B cell (primary cell): ENCODE measurements at regions of chr3 and their contacts with region 1.

Region 1: GRCh38 chr3:27357665-27358258 is 11.4 kb downstream of the NEK10 start:
- DNase-seq: peak; percentile 67
- ATAC-seq: peak; percentile 80
- H3K4me3 ChIP-seq: no peak overlapping the region
- H3K4me3 Mint-ChIP-seq: no peak overlapping the region
- H3K27ac ChIP-seq: no peak overlapping the region
- H3K27ac Mint-ChIP-seq: no peak overlapping the region
- H3K4me1 ChIP-seq: peaks cover 22 to 29% of the 10 kb centered on the region in 2 donors
- H3K4me1 Mint-ChIP-seq: peaks cover 34% of the 10 kb centered on the region
- H3K27me3 ChIP-seq: no peaks in the 10 kb centered on the region
- H3K27me3 Mint-ChIP-seq: no peaks in the 10 kb centered on the region
- CTCF ChIP-seq: peak; percentile 81

Region 2: DNA sequence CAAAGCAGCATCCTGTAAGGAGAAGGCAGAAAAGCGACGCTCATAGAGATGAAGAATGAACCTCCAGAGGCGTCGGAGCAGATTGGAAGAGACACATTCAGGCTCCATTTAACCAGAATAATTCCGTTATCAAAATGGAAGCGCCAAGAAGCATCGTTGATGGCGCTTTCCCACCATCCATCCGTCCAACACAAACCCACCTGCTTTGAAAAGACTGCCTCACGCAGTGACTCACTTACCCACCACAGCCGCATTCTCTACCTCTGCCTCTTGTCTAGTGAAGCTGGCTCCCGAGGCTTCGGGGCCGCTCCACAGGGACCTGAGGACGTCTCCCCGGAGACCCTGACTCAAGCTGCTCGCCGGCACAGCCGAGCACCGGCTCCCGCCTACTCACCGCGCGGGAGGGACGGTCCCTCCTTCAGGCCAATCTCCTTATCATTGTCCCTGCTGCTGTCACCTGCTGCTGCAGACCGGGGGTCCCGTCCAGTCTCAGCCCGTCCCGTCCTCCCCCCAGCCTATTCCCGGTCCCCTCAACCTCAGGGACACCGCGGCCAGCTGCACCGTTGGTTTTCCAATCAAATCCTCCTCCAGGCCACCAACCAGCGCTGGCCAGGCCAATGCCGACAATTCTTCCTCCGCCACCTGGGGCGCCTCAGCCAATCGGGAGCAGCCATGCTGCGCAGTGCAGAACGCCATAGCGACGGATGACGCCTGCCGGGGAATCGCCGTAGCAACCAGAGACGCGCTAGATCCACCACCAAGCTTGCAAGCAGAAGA is 11.3 kb after region 1 on chr3 and contains the start of gene NEK10:
- CTCF ChIA-PET with region 1: interaction called, 11 read pairs
- POLR2A ChIA-PET with region 1: no interaction called
- intact Hi-C with region 1: loop called (anchors 1 kb)
- DNase-seq: peak; percentile 92
- ATAC-seq: peak; percentile 98
- H3K4me3 ChIP-seq: peak within 1 kb of the TSS; percentile 52 to 69 (median 61)
- H3K4me3 Mint-ChIP-seq: peak within 1 kb of the TSS; percentile 94
- H3K27ac ChIP-seq: no peak within 1 kb of the TSS
- H3K27ac Mint-ChIP-seq: peak within 1 kb of the TSS; percentile 78
- H3K4me1 ChIP-seq: peaks cover 7 to 14% of the 10 kb centered on the region in 2 donors
- H3K4me1 Mint-ChIP-seq: peaks cover 17% of the 10 kb centered on the region
- H3K27me3 ChIP-seq: no peaks in the 10 kb centered on the region
- H3K27me3 Mint-ChIP-seq: peaks cover 3% of the 10 kb centered on the region
- CTCF ChIP-seq: no peak
- total RNA-seq, gene NEK10: 0.36 and 0.49 TPM in 2 replicates

Region 3: GRCh38 chr3:27467545-27467944 is 109.8 kb after region 1 on chr3:
- CTCF ChIA-PET with region 1: interaction called, 16 read pairs
- POLR2A ChIA-PET with region 1: no interaction called
- intact Hi-C with region 1: loop called (anchors 1 kb)
- DNase-seq: peak; percentile 59
- ATAC-seq: peak; percentile 71
- H3K4me3 ChIP-seq: no peak overlapping the region
- H3K4me3 Mint-ChIP-seq: peak overlapping the region; percentile 6
- H3K27ac ChIP-seq: no peak overlapping the region
- H3K27ac Mint-ChIP-seq: peak overlapping the region; percentile 3
- H3K4me1 ChIP-seq: peaks cover 0 to 3% of the 10 kb centered on the region in 2 donors
- H3K4me1 Mint-ChIP-seq: peaks cover 24% of the 10 kb centered on the region
- H3K27me3 ChIP-seq: no peaks in the 10 kb centered on the region
- H3K27me3 Mint-ChIP-seq: no peaks in the 10 kb centered on the region
- CTCF ChIP-seq: peak; percentile 75

Region 4: GRCh38 chr3:27659279-27660021 is 301.7 kb after region 1 on chr3:
- CTCF ChIA-PET with region 1: interaction called, 3 read pairs
- POLR2A ChIA-PET with region 1: no interaction called
- intact Hi-C with region 1: loop called (anchors 5 kb)
- DNase-seq: peak; percentile 52
- ATAC-seq: peak; percentile 62
- H3K4me3 ChIP-seq: no peak overlapping the region
- H3K4me3 Mint-ChIP-seq: no peak overlapping the region
- H3K27ac ChIP-seq: no peak overlapping the region
- H3K27ac Mint-ChIP-seq: no peak overlapping the region
- H3K4me1 ChIP-seq: peaks cover 0 to 2% of the 10 kb centered on the region in 2 donors
- H3K4me1 Mint-ChIP-seq: peaks cover 8% of the 10 kb centered on the region
- H3K27me3 ChIP-seq: no peaks in the 10 kb centered on the region
- H3K27me3 Mint-ChIP-seq: no peaks in the 10 kb centered on the region
- CTCF ChIP-seq: peak; percentile 85

Region 5: GRCh38 chr3:27681245-27681748 is 323.5 kb after region 1 on chr3:
- CTCF ChIA-PET with region 1: interaction called, 24 read pairs
- POLR2A ChIA-PET with region 1: no interaction called
- intact Hi-C with region 1: loop called (anchors 1 kb)
- DNase-seq: peak; percentile 87
- ATAC-seq: peak; percentile 90
- H3K4me3 ChIP-seq: peak overlapping the region in 1 of 5 experiments; percentile 26
- H3K4me3 Mint-ChIP-seq: peak overlapping the region; percentile 51
- H3K27ac ChIP-seq: no peak overlapping the region
- H3K27ac Mint-ChIP-seq: peak overlapping the region; percentile 28
- H3K4me1 ChIP-seq: peaks cover 5 to 17% of the 10 kb centered on the region in 2 donors
- H3K4me1 Mint-ChIP-seq: peaks cover 17% of the 10 kb centered on the region
- H3K27me3 ChIP-seq: peaks cover 0 to 3% (median 0%) of the 10 kb centered on the region in 4 experiments
- H3K27me3 Mint-ChIP-seq: peaks cover 4% of the 10 kb centered on the region
- CTCF ChIP-seq: peak; percentile 79

Region 6: DNA sequence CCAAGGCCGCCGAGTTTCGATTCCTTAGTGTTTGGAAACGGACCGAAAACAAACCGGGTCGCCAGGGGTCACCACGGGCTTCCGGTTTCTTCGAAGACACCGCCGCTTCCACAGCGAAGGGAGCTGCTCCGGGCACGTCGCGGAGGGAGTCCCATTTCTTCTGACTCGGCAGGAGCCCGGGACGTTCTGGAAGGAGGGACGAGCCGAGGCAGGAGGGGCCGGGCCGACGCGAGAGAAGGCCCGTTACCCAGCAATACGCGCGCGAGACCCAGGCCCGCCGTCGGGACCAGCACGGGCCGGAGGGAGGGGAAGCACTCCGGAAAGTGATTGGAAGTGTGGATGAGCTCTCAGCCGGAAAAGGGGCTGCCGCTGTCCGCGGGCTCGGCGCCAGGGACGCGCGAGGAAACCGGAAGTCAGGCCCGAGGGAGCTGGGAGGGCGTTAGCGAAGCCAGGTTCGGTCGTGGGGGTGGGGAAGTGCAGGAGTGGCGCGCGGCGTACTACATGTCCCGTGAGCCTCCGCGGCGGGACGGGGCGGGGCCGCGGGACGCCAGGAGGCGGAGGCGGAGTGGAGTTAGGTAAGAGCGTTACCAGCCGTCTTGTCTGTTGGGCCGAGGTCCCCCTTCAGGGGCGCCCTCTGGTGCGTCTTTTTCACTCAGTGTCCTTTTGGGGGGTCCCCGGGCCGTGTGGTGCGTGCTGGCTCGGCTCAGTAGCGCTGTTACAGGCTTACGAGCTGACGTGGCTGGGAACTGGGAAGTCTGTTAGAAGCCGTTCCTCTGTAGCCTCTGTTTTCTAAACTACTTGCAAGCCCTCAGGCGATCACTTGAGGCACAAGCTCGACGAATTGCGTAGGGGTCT is 991.1 kb after region 1 on chr3 and contains the starts of genes AZI2 and ZCWPW2:
- CTCF ChIA-PET with region 1: no interaction called
- POLR2A ChIA-PET with region 1: no interaction called
- intact Hi-C with region 1: loop called (anchors 2 kb)
- DNase-seq: peak; percentile 94
- ATAC-seq: peak; percentile 88
- H3K4me3 ChIP-seq: peak within 1 kb of the TSS; percentile 74 to 100 (median 92)
- H3K4me3 Mint-ChIP-seq: peak within 1 kb of the TSS; percentile 99
- H3K27ac ChIP-seq: peak within 1 kb of the TSS; percentile 96 to 99
- H3K27ac Mint-ChIP-seq: peak within 1 kb of the TSS; percentile 99
- H3K4me1 ChIP-seq: peaks cover 14 to 15% of the 10 kb centered on the region in 2 donors
- H3K4me1 Mint-ChIP-seq: peaks cover 39% of the 10 kb centered on the region
- H3K27me3 ChIP-seq: no peaks in the 10 kb centered on the region
- H3K27me3 Mint-ChIP-seq: no peaks in the 10 kb centered on the region
- CTCF ChIP-seq: peak; percentile 34
- total RNA-seq, gene AZI2: 21.1 and 29.1 TPM in 2 replicates
- total RNA-seq, gene ZCWPW2: not detected in 2 replicates